Transverse colon (tissue), 4 donors: ENCODE measurements at regions of chr1 and their contacts with region 1.

Region 1: DNA sequence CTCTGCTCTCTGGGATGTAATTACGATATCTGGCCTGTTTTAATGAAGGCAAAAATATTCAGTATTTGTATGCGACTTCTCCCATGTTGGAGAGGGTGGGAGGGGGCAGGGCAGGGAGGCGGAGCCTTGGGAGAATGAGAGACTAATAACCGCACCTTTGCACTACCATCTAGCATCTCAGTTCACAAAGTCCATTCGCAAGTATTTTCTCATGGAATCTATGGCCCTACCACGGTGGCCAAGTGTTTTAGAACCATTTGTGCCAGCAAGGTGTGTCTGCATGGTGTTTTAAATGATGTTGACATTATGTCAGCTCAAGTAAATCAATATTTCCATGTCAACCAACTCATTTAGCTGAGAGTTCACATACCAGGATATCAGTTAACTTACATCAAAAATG is 14.3 kb upstream of the BLACAT1 start:
- DNase-seq: peak; percentile 37
- H3K4me3 ChIP-seq: no peak overlapping the region
- H3K27ac ChIP-seq: no peak overlapping the region
- H3K4me1 ChIP-seq: peaks cover 0 to 10% (median 0%) of the 10 kb centered on the region in 4 donors
- H3K27me3 ChIP-seq: peaks cover 14% of the 10 kb centered on the region
- CTCF ChIP-seq: no peak
- EP300 ChIP-seq: no peak
- POLR2A ChIP-seq: no peak

Region 2: GRCh38 chr1:204617256-204618147 is 852.6 kb before region 1 on chr1:
- in situ Hi-C with region 1: no loop called
- intact Hi-C with region 1: no loop called
- DNase-seq: no peak
- H3K4me3 ChIP-seq: no peak overlapping the region
- H3K27ac ChIP-seq: no peak overlapping the region
- H3K4me1 ChIP-seq: no peaks in the 10 kb centered on the region
- H3K27me3 ChIP-seq: no peaks in the 10 kb centered on the region
- CTCF ChIP-seq: no peak
- EP300 ChIP-seq: no peak
- POLR2A ChIP-seq: no peak

Region 3: DNA sequence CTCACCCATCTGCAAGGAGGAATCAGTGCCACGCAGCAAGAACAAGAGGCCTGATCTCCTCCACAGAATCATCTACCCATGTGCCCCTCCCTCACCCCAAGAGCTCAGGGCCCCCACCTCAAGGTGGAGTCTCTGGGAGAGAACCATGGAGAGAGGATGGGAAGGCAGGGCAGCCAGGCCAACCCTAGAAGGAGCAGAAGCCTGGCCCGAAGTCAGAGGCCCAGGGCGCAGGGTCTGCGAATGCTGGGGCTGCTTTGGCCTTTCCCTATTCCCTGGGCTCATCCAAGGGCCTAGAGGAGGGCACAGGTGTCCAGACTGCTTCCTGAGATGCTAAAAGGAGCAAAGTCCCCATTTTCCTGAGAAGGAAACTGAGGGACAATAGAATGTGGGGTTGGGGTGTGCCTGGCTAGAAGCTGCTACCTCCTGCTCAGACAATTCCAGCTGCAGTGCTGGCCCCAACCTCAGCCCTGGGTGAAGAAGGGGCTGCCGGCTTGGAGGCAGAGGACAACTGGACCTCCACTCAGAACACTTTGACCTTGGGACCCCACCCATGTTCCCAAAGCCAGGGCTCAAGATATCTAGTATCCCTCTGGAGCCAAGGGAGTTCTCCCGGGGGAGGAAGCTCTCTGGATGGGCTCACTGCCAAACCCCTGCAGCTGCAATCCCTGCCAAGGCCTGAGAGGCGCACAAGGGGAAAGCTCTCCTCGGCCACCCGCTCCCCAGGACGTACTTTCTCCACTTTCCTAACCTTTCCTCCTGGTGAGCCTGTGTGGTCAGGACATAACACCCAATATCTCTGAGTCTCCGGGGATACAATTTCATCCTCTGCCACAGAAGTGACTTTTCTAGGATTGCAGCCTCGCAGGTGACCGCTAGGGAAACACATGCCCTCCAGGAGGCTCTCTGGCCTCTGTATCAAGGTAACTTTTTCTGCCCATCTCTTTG is 31.6 kb before region 1 on chr1:
- in situ Hi-C with region 1: no loop called
- intact Hi-C with region 1: loop called (anchors 1 kb)
- DNase-seq: peak; percentile 87
- H3K4me3 ChIP-seq: no peak overlapping the region
- H3K27ac ChIP-seq: no peak overlapping the region
- H3K4me1 ChIP-seq: peaks cover 23 to 57% (median 39%) of the 10 kb centered on the region in 4 donors
- H3K27me3 ChIP-seq: peaks cover 9% of the 10 kb centered on the region
- CTCF ChIP-seq: peak; percentile 61 to 91 (median 71)
- EP300 ChIP-seq: no peak
- POLR2A ChIP-seq: no peak

Region 4: DNA sequence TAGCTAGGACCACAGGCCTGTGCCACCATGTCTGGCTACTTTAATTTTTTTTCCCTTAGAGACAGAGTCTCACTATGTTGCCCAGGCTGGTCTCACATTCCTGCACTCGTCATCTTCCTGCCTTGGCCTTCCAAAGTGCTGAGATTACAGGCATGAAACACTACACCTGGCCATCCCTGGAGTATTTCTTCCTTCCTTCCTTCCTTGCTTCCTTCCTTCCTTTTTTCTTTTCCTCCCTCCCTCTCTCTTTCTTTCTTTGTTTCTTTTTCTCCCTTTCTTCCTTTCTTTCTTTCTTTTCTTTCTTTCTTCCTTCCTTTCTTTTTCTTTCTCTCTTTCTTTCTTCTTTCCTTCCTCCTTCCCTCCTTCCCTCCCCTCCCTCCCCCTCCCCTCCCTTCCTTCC is 426.2 kb after region 1 on chr1:
- in situ Hi-C with region 1: no loop called
- intact Hi-C with region 1: no loop called
- DNase-seq: no peak
- H3K4me3 ChIP-seq: no peak overlapping the region
- H3K27ac ChIP-seq: no peak overlapping the region
- H3K4me1 ChIP-seq: no peaks in the 10 kb centered on the region
- H3K27me3 ChIP-seq: peaks cover 7% of the 10 kb centered on the region
- CTCF ChIP-seq: no peak
- EP300 ChIP-seq: no peak
- POLR2A ChIP-seq: no peak